Activated CD4-positive, alpha-beta memory T cell treated with anti-CD3 and anti-CD28 coated beads for 36 hours (primary cell): ENCODE measurements at regions of chr13 and their contacts with region 1.

Region 1: DNA sequence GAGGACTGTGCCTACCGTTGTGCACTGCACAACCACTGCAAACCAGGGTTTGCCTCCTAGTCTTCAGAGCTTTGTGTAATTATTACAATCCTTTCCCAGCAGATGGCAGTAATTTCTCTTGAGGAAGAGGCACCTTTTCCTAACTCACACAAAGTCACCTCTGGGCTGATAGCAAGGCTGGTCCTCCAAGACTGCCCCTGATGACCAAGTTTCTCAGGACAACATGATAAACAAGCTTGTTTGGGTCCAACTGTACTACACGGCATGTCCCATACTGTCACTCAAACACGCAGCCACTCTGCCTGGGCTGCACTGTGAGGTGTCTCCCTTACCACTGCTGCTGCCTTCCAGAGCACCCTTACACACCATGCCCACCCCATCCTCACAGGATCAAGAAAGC is 39.3 kb downstream of the RFXAP start:
- DNase-seq: no peak
- H3K4me3 Mint-ChIP-seq: no peak overlapping the region
- H3K27ac Mint-ChIP-seq: no peak overlapping the region
- H3K4me1 Mint-ChIP-seq: peaks cover 4% of the 10 kb centered on the region
- H3K27me3 Mint-ChIP-seq: peaks cover 23% of the 10 kb centered on the region

Region 2: DNA sequence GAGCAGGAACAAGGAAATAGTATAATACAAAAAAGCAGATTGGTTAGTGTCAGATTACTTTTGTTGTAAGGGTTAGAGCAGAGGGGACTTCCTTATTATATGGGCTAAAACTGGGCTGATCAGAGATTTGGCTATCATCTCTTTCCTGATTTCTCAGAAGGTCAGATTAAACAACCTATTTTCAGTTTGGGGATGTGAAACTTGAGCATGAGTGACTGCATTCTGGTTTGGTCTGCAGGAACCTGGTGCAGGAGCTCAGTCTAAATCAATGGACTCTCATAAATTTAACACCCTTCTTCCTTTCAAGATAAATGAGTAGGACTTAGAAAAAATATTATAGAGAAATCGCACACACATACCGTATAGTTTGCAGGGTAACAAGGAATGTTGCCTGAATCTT is 52.2 kb before region 1 on chr13:
- CTCF ChIA-PET with region 1: no interaction called
- POLR2A ChIA-PET with region 1: no interaction called
- intact Hi-C with region 1: no loop called
- DNase-seq: no peak
- H3K4me3 Mint-ChIP-seq: no peak overlapping the region
- H3K27ac Mint-ChIP-seq: no peak overlapping the region
- H3K4me1 Mint-ChIP-seq: no peaks in the 10 kb centered on the region
- H3K27me3 Mint-ChIP-seq: peaks cover 28% of the 10 kb centered on the region

Region 3: DNA sequence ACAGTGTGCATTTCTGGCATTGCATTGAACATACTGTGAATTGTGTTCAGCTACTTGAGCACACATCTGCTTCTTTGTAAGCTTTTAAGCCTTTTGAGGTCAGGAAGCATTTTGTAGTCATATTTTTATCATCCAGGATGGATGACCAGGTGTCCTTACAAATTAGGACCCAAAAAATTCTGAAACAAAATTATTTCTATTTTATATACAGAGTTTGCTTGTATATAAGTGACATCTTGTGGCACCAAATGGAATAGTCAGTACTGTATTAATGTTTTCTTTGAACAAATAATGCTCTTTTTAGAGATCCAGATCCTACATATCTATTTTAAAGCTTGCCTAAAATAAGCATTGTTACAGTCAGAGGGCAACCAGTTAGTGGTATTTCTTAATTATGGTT is 210.7 kb after region 1 on chr13:
- CTCF ChIA-PET with region 1: no interaction called
- POLR2A ChIA-PET with region 1: no interaction called
- intact Hi-C with region 1: loop called (anchors 10 kb)
- DNase-seq: no peak
- H3K4me3 Mint-ChIP-seq: no peak overlapping the region
- H3K27ac Mint-ChIP-seq: no peak overlapping the region
- H3K4me1 Mint-ChIP-seq: no peaks in the 10 kb centered on the region
- H3K27me3 Mint-ChIP-seq: peaks cover 2% of the 10 kb centered on the region

Region 4: GRCh38 chr13:37097076-37097475 is 238.8 kb after region 1 on chr13:
- CTCF ChIA-PET with region 1: no interaction called
- POLR2A ChIA-PET with region 1: no interaction called
- intact Hi-C with region 1: no loop called
- DNase-seq: no peak
- H3K4me3 Mint-ChIP-seq: no peak overlapping the region
- H3K27ac Mint-ChIP-seq: no peak overlapping the region
- H3K4me1 Mint-ChIP-seq: peaks cover 8% of the 10 kb centered on the region
- H3K27me3 Mint-ChIP-seq: no peaks in the 10 kb centered on the region

Region 5: DNA sequence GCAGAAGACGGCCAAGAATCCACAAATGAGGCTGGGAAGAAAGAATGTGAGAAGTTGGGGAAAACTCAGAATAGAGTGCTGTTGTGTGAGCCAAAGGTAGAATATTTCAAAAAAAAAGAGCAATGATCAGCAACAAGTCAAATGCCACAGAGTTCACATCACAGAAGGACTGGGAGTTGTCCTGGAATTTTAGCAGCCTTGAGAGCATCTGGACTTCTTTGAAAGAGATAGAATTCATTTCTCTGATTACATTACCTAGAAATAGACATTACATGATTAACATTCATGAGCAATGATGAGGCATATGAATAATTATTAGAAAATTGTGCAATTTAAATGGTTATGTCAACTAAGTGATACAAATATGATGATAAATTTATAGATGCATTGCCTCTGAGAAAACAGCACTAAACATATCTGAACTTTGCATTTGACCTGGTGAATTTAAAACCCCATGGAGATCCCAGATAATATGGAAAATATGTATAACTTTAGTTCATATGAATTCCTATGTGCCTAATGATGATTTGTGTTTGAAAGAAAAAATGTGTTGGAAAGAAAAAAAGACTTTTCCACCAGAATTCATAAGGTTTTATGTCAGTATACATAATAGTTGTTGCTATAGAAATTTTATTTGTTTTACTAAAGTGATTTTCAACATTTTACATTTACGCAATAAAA is 554.1 kb after region 1 on chr13:
- CTCF ChIA-PET with region 1: no interaction called
- POLR2A ChIA-PET with region 1: no interaction called
- intact Hi-C with region 1: no loop called
- DNase-seq: no peak
- H3K4me3 Mint-ChIP-seq: no peak overlapping the region
- H3K27ac Mint-ChIP-seq: no peak overlapping the region
- H3K4me1 Mint-ChIP-seq: no peaks in the 10 kb centered on the region
- H3K27me3 Mint-ChIP-seq: no peaks in the 10 kb centered on the region